Activated CD4-positive, alpha-beta memory T cell treated with anti-CD3 and anti-CD28 coated beads for 36 hours (primary cell): ENCODE measurements at regions of chr10 and their contacts with region 1.

Region 1: GRCh38 chr10:92103376-92104090 is 180.0 kb downstream of the BTAF1 start:
- DNase-seq: no peak
- H3K4me3 Mint-ChIP-seq: no peak overlapping the region
- H3K27ac Mint-ChIP-seq: no peak overlapping the region
- H3K4me1 Mint-ChIP-seq: peaks cover 17% of the 10 kb centered on the region
- H3K27me3 Mint-ChIP-seq: no peaks in the 10 kb centered on the region

Region 2: DNA sequence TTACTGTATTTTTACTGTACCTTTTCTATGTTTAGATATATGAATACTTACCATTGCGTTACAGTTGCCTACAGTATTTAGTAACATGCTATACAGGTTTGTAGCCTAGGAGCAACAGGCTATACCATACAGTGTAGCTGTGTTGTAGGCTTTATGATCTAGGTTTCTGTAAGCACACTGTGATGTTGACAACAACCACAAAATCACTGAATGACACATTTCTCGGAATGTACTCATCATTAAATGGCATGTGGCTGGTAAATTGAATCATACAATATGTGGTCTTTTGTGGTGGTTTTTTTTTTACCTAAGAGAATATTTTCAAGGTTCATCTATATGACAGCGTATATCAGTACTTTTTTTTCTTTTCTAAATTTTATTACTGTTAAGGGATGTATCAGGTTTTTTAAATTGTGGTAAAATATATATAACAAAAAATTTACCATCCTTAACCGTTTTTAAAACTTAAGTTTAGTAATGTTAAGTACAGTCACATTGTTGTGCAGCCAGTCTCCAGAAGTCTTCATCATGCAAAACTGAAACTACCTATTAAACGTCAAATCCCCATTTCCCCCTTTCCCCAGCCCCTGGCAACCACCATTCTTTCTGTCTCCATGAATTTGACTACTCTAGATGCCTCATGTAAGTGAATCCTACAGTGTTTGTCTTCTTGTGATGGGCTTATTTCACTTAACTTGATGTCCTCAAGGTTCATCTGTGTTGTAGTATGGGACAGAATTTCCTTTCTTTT is 158.5 kb before region 1 on chr10:
- CTCF ChIA-PET with region 1: no interaction called
- POLR2A ChIA-PET with region 1: no interaction called
- intact Hi-C with region 1: loop called (anchors 1 kb)
- DNase-seq: peak; percentile 48
- H3K4me3 Mint-ChIP-seq: no peak overlapping the region
- H3K27ac Mint-ChIP-seq: peak overlapping the region; percentile 61
- H3K4me1 Mint-ChIP-seq: peaks cover 21% of the 10 kb centered on the region
- H3K27me3 Mint-ChIP-seq: no peaks in the 10 kb centered on the region

Region 3: DNA sequence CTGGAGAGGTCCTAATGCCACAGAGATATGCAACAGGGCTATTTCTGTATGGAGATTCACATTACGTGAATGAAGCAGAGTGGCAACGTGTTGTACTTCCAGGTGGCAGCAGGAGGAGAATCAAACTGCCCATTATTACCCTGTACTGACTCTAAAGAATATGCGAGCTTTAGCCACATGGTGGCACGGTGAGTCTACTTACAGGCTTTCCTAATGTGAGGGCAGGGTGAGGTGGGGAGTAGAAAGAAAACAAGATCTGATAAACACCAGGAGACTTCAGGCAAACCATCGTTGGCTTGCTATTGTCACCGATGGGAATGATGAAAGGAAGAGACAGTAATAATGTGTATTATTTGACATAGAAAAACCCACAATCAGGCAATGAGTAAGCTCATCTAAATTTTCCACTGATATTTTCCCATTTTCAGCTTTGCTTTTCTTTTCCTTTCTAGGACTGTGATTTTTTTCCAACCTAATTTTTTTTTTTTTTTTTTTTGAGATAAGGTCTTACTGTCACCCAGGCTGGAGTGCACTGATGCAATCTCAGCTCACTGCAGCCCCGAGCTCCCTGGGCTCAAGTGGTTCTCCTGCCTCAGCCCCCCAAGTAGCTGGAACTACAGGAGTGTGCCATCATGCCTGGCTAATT is 15.7 kb before region 1 on chr10:
- CTCF ChIA-PET with region 1: interaction called, 12 read pairs
- POLR2A ChIA-PET with region 1: interaction called, 3 read pairs
- intact Hi-C with region 1: no loop called
- DNase-seq: peak; percentile 72
- H3K4me3 Mint-ChIP-seq: no peak overlapping the region
- H3K27ac Mint-ChIP-seq: no peak overlapping the region
- H3K4me1 Mint-ChIP-seq: peaks cover 10% of the 10 kb centered on the region
- H3K27me3 Mint-ChIP-seq: no peaks in the 10 kb centered on the region

Region 4: GRCh38 chr10:92124616-92125143 is 21.1 kb after region 1 on chr10:
- CTCF ChIA-PET with region 1: no interaction called
- POLR2A ChIA-PET with region 1: no interaction called
- intact Hi-C with region 1: no loop called
- DNase-seq: no peak
- H3K4me3 Mint-ChIP-seq: no peak overlapping the region
- H3K27ac Mint-ChIP-seq: no peak overlapping the region
- H3K4me1 Mint-ChIP-seq: no peaks in the 10 kb centered on the region
- H3K27me3 Mint-ChIP-seq: no peaks in the 10 kb centered on the region

Region 5: GRCh38 chr10:92208736-92209327 is 105.3 kb after region 1 on chr10:
- CTCF ChIA-PET with region 1: no interaction called
- POLR2A ChIA-PET with region 1: interaction called, 3 read pairs
- intact Hi-C with region 1: loop called (anchors 5 kb)
- DNase-seq: peak; percentile 14
- H3K4me3 Mint-ChIP-seq: no peak overlapping the region
- H3K27ac Mint-ChIP-seq: no peak overlapping the region
- H3K4me1 Mint-ChIP-seq: peaks cover 15% of the 10 kb centered on the region
- H3K27me3 Mint-ChIP-seq: peaks cover 4% of the 10 kb centered on the region

Region 6: DNA sequence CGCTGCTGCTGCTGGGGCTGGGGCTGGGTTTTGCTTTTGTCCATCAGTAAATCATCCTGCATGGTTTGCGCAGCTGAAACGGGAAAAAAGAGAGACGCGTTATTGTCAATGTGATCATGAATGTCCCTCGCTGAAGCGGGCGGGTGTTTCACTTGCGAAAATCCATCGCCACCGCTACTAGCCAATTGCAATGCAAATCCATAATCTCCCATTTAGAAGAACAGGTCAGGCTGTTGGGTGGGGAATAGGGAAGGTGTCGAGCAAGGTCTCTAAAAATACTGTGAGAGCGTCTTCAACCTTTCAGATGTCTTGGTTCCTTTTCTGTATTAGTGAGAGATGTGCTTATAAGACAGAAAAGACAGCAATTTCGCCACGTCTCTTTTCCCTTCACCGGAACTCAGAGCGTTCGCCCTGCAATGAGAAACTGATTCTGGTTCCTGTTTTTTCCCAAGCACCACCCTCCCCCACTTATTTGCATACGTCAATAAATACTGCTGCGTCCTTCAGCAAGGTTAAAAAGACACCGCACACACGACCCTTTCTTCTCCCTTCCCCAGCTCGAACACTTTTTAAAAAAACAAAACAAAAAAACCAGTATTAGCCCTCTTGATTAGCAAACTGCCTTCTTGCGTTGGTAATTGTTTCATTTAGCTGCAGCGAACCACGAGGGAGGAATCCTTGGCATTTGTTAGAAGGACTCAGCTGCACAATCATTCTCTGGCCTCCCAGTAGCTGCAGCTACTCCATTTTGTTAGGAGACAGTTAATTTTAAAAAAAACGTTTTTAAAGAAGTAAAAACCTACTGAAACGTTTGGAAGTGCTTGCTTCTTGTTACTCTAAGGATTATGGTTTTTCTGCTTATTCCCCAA is 137.0 kb after region 1 on chr10:
- CTCF ChIA-PET with region 1: no interaction called
- POLR2A ChIA-PET with region 1: no interaction called
- intact Hi-C with region 1: loop called (anchors 5 kb)
- DNase-seq: peak; percentile 38
- H3K4me3 Mint-ChIP-seq: peak overlapping the region; percentile 72
- H3K27ac Mint-ChIP-seq: no peak overlapping the region
- H3K4me1 Mint-ChIP-seq: peaks cover 33% of the 10 kb centered on the region
- H3K27me3 Mint-ChIP-seq: peaks cover 9% of the 10 kb centered on the region

Region 7: GRCh38 chr10:92787557-92788152 is 684.1 kb after region 1 on chr10:
- CTCF ChIA-PET with region 1: no interaction called
- POLR2A ChIA-PET with region 1: no interaction called
- intact Hi-C with region 1: no loop called
- DNase-seq: no peak
- H3K4me3 Mint-ChIP-seq: no peak overlapping the region
- H3K27ac Mint-ChIP-seq: no peak overlapping the region
- H3K4me1 Mint-ChIP-seq: no peaks in the 10 kb centered on the region
- H3K27me3 Mint-ChIP-seq: peaks cover 6% of the 10 kb centered on the region